GM12878 (cell line): ENCODE measurements at regions of chr10 and their contacts with region 1.

Region 1: DNA sequence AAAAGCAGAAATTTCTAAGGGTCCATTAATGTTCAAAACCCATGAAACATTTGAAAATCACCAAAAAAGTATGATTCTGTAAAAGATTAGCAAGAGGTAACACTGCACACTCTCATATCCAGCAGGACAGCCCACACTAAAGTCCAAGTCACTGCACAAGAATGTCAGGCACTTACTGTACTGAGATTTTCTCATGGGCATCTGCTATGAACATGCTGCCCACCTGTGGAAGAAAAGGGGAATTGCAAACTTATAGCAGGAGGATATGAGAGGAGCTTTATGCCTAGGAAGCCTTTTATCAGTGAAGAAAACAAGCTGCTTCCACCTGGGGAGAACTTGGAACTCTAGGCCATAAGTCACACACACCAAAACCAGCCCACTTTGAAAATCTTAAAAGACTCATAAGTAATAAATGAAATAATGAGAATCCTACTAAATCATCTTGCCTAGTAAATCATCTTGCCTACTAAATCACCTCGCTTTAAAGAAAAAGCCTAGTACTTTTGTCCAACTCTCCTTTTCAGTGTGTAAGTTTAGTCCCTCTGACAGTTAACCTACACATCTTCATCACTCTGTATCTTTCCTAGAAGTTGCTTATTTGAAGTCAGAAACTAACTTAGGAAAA is 46.1 kb downstream of the ARMH3 start:
- DNase-seq: peak; percentile 62
- ATAC-seq: peak; percentile 99
- H3K4me3 ChIP-seq: no peak overlapping the region
- H3K27ac ChIP-seq: no peak overlapping the region
- H3K4me1 ChIP-seq: peaks cover 9% of the 10 kb centered on the region
- H3K27me3 ChIP-seq: no peaks in the 10 kb centered on the region
- CTCF ChIP-seq: peak; percentile 97 to 99 (median 99); a peak in 5 of 6 replicates
- EP300 ChIP-seq: no peak
- POLR2A ChIP-seq: no peak
- RAD21 ChIP-seq: peak; percentile 100

Region 2: DNA sequence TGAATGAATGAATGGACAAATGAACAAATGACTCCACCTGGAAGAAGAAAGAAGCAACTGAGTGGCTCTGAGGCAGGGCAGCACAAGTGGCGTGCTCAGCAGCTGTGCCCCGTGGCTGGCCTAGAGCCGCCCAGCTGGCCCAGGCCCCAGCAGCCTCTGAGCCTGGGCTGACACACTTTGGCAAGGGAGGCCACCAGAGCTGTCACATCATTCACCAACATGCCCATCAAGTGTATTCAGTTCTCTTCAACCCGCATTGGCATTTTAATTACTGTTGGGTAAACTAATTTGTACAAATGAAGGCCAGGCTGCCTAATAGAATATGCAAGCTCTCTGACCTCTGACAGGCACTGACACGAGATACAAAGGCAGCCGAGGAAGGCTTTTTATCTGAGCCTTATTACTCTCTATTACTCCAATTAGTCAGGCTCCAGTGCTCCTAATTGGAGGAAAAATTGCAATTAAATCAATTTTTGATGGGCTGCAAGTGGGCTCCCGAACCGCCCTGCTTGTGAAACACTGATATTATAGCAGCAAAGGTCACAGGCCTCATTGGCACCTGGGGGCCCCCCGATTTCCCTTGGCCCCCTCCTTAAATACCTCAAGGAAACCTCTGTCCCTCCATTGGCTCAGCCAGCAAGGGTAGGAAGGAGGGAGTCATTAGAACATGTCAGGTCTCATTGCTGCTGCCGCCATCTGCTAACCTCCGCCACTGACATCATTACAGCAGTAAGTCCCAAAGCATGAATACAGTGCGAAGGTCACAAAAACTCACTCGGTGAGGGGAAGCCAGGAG is 379.9 kb before region 1 on chr10:
- CTCF ChIA-PET with region 1: no interaction called
- POLR2A ChIA-PET with region 1: no interaction called
- RAD21 ChIA-PET with region 1: no interaction called
- SMC1A ChIA-PET with region 1: no interaction called
- in situ Hi-C with region 1: no loop called
- intact Hi-C with region 1: no loop called
- DNase-seq: no peak
- ATAC-seq: no peak
- H3K4me3 ChIP-seq: no peak overlapping the region
- H3K27ac ChIP-seq: no peak overlapping the region
- H3K4me1 ChIP-seq: no peaks in the 10 kb centered on the region
- H3K27me3 ChIP-seq: no peaks in the 10 kb centered on the region
- CTCF ChIP-seq: no peak
- EP300 ChIP-seq: no peak
- POLR2A ChIP-seq: no peak
- RAD21 ChIP-seq: no peak

Region 3: DNA sequence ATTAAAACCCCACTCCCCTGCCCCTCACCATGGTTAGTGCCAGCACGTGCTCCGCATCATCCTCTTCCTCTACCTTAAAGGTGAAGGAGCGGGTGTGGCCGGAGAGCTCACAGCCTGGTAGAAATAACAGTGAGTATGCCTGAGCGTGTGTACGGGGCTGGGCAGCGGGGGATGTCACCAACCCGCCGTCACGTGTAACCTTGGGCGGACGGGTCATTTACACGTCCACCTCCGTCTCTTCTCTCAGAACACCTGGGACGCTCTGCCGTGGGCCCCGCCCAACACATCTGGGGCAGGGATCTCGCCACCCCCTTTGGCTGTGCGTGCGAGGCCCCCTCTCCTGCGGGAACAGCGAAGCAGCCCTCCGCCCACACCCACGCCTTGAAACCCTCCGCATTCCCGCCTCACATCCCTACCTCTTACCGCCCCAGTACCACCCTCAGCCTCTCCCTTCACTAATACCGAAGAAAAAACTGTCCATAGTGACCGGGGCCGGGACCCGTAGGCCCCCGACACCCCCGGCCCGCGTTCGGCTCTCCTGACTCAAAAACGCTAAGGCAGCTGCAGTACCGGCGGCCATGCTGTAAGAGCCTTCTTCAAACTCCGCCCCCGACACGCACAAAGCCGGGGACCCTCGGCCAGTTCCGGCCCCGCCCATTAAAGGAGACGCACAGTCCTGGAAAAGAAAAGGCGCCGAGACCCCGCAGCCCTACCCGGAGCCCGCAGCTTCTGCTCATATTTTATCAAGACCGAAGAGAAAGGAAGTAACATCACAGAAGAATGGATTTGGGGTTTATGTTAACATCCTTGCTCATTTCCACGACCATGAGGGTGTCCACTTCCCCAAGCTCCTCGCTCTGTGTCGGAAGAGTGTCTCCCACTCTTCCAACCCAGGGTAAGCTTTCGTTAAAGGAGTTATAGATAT is 226.8 kb before region 1 on chr10 and contains the start of gene NPM3:
- CTCF ChIA-PET with region 1: interaction called, 24 read pairs
- POLR2A ChIA-PET with region 1: interaction called, 4 read pairs
- RAD21 ChIA-PET with region 1: interaction called, 4 read pairs
- SMC1A ChIA-PET with region 1: interaction called, 4 read pairs
- in situ Hi-C with region 1: no loop called
- intact Hi-C with region 1: no loop called
- DNase-seq: no peak
- ATAC-seq: peak; percentile 76
- H3K4me3 ChIP-seq: peak within 1 kb of the TSS; percentile 85
- H3K27ac ChIP-seq: peak within 1 kb of the TSS; percentile 71
- H3K4me1 ChIP-seq: peaks cover 41% of the 10 kb centered on the region
- H3K27me3 ChIP-seq: no peaks in the 10 kb centered on the region
- CTCF ChIP-seq: no peak
- EP300 ChIP-seq: no peak
- POLR2A ChIP-seq: peak; percentile 76
- RAD21 ChIP-seq: no peak
- polyA plus RNA-seq, gene NPM3: 19.7 to 49.6 TPM

Region 4: DNA sequence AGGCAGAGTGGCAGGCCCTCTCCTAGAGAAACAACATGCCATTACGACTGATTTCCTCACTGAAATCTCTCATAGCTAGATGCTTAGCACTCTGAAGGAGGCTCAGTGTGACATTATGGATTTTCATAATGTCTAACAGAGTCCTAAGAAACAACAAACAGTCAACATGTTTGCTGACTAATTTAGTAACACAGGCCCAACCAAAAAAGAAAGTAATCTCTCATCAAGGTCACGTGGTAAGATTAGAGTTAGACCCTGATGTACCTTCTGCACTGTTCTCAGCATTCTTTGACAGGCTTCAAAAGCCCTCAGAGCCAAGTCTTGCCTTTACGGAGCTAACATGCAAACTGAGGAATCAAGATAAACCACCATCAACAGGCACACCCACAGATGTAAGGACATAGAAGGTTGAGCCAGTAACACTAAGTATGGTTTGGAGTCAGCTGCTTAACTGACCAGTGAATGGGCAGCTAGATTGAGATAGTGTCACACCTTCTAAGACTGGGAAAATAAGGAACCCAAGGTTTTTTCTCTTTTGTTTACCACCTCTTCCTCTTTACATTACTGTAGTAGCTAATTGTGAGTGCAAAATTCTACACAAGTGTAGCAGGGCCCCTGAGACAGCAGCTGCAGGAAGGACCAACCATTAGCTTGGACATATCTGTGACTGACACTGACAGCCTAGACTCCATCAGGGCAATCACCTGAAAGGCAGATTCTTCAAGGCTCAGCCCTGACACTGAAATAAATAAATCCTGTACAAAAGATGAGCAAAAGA is 151.0 kb before region 1 on chr10:
- CTCF ChIA-PET with region 1: interaction called, 43 read pairs
- POLR2A ChIA-PET with region 1: interaction called, 3 read pairs
- RAD21 ChIA-PET with region 1: interaction called, 21 read pairs
- SMC1A ChIA-PET with region 1: interaction called, 62 read pairs
- in situ Hi-C with region 1: no loop called
- intact Hi-C with region 1: no loop called
- DNase-seq: peak; percentile 61
- ATAC-seq: peak; percentile 91
- H3K4me3 ChIP-seq: peak overlapping the region; percentile 28; the same call in 1 of the 2 replicates
- H3K27ac ChIP-seq: peak overlapping the region; percentile 83
- H3K4me1 ChIP-seq: peaks cover 32% of the 10 kb centered on the region
- H3K27me3 ChIP-seq: no peaks in the 10 kb centered on the region
- CTCF ChIP-seq: no peak
- EP300 ChIP-seq: peak in 1 of 2 experiments; percentile 37; a peak in 1 of 4 replicates
- POLR2A ChIP-seq: peak; percentile 45; the same call in 1 of the 2 replicates
- RAD21 ChIP-seq: no peak

Region 5: DNA sequence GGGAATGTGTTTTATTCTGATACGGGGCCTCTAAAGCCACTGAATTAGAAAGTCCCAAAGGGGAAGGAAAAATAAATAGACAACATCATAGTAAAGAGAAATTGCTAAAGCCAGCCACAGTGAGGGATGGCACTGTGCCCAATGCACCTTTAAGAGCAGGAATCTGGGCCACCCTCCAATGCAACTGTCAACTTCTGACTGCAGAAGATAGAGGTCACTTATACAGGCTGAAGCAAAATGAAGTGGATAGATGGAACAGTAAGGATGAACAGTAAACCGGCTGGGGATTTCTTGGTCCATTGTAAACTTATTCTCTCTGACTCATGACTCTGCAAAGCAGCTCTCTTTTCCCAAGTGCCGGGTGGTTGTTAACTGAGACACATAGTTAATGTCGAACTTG is 112.3 kb before region 1 on chr10:
- CTCF ChIA-PET with region 1: interaction called, 543 read pairs
- POLR2A ChIA-PET with region 1: interaction called, 26 read pairs
- RAD21 ChIA-PET with region 1: interaction called, 352 read pairs
- SMC1A ChIA-PET with region 1: interaction called, 408 read pairs
- in situ Hi-C with region 1: no loop called
- intact Hi-C with region 1: no loop called
- DNase-seq: no peak
- ATAC-seq: no peak
- H3K4me3 ChIP-seq: no peak overlapping the region
- H3K27ac ChIP-seq: peak overlapping the region; percentile 29
- H3K4me1 ChIP-seq: peaks cover 44% of the 10 kb centered on the region
- H3K27me3 ChIP-seq: no peaks in the 10 kb centered on the region
- CTCF ChIP-seq: no peak
- EP300 ChIP-seq: no peak
- POLR2A ChIP-seq: no peak
- RAD21 ChIP-seq: no peak

Region 6: GRCh38 chr10:101938316-101939281 is 71.3 kb before region 1 on chr10:
- CTCF ChIA-PET with region 1: interaction called, 10 read pairs
- POLR2A ChIA-PET with region 1: no interaction called
- RAD21 ChIA-PET with region 1: interaction called, 7 read pairs
- SMC1A ChIA-PET with region 1: interaction called, 14 read pairs
- in situ Hi-C with region 1: no loop called
- intact Hi-C with region 1: no loop called
- DNase-seq: no peak
- ATAC-seq: no peak
- H3K4me3 ChIP-seq: no peak overlapping the region
- H3K27ac ChIP-seq: peak overlapping the region; percentile 18; the same call in 1 of the 2 replicates
- H3K4me1 ChIP-seq: peaks cover 4% of the 10 kb centered on the region
- H3K27me3 ChIP-seq: no peaks in the 10 kb centered on the region
- CTCF ChIP-seq: no peak
- EP300 ChIP-seq: no peak
- POLR2A ChIP-seq: no peak
- RAD21 ChIP-seq: no peak

Region 7: GRCh38 chr10:101995451-101996063 is 14.4 kb before region 1 on chr10:
- CTCF ChIA-PET with region 1: interaction called, 42 read pairs
- POLR2A ChIA-PET with region 1: no interaction called
- RAD21 ChIA-PET with region 1: interaction called, 37 read pairs
- SMC1A ChIA-PET with region 1: interaction called, 35 read pairs
- in situ Hi-C with region 1: no loop called
- intact Hi-C with region 1: no loop called
- DNase-seq: no peak
- ATAC-seq: no peak
- H3K4me3 ChIP-seq: no peak overlapping the region
- H3K27ac ChIP-seq: peak overlapping the region; percentile 13; the same call in 1 of the 2 replicates
- H3K4me1 ChIP-seq: peaks cover 21% of the 10 kb centered on the region
- H3K27me3 ChIP-seq: no peaks in the 10 kb centered on the region
- CTCF ChIP-seq: no peak
- EP300 ChIP-seq: no peak
- POLR2A ChIP-seq: no peak
- RAD21 ChIP-seq: no peak

Region 8: DNA sequence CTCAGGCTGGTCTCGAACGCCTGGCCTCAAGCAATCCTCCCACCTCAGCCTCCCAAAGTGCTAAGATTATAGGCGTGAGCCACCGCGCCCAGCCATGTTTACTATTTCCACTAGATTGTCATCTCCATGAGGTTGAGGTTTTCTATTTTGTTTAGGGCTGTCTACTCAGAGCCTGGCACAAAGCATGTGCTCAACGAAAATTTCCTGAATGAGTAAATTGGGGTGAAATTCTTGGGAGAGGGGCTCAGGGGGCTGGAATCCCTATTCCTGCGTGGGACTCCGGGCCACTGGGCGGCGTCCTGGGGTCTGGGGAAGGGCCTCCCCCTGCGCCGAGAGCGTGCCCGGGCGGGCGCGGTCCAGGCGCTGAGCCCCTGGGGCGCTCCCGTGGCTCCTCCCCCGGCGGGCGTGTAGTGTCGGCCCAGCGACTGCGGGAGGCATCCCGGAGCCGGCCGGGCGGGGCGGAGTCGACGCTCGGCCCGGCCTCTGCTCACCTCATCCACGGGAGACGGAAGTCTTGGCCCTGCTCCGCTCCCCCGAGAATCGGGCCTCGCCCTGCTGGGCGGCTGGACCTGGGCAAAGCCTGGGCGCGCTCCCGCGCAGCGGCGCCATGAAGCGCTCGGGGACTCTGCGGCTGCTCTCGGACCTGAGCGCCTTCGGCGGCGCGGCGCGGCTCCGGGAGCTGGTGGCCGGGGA is 55.1 kb after region 1 on chr10 and contains the start of gene HPS6:
- CTCF ChIA-PET with region 1: interaction called, 71 read pairs
- POLR2A ChIA-PET with region 1: no interaction called
- RAD21 ChIA-PET with region 1: interaction called, 20 read pairs
- SMC1A ChIA-PET with region 1: interaction called, 15 read pairs
- in situ Hi-C with region 1: no loop called
- intact Hi-C with region 1: no loop called
- DNase-seq: peak; percentile 61
- ATAC-seq: peak; percentile 98
- H3K4me3 ChIP-seq: peak within 1 kb of the TSS; percentile 90
- H3K27ac ChIP-seq: peak within 1 kb of the TSS; percentile 73
- H3K4me1 ChIP-seq: peaks cover 7% of the 10 kb centered on the region
- H3K27me3 ChIP-seq: no peaks in the 10 kb centered on the region
- CTCF ChIP-seq: peak in 2 of 3 experiments; percentile 31 to 35; a peak in 3 of 6 replicates
- EP300 ChIP-seq: no peak
- POLR2A ChIP-seq: peak; percentile 89
- RAD21 ChIP-seq: no peak
- polyA plus RNA-seq, gene HPS6: 1.4 to 2.8 TPM